Esophagus squamous epithelium (tissue), 5 donors: ENCODE measurements at regions of chr2 and their contacts with region 1.

Region 1: DNA sequence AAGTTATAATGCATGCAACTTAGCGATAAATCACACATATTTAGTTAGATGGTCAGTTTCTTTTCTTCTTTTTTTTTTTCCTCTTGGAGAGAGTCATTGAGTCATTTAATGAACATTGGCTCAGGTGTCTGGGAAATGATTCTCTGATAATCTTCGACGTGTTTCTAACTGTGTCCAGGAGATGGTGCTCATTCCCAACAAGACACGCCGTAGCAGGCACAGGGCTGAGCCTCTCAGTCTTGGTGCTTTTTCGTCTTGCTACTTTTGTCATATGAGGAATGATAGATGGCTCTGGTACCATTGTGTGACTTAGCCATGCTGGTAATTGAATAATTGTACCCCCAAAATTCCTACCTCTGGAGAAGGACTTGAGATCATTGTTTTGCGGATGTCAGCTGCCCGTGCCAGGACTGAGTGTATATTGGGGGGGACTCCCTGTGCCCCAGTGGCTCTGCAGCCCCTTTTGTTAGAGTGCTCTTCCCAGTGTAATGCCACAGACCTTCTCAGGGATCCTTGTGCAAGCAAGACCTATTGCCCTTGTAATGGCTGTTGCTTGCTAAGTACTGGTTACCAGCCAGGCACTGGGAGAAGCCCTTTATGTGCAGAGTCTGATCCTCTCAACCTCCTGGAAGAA is 107.6 kb upstream of the CYRIA start:
- DNase-seq: no peak
- H3K4me3 ChIP-seq: no peak overlapping the region
- H3K27ac ChIP-seq: no peak overlapping the region
- H3K4me1 ChIP-seq: no peaks in the 10 kb centered on the region
- H3K27me3 ChIP-seq: peaks cover 0 to 13% (median 0%) of the 10 kb centered on the region in 4 donors
- CTCF ChIP-seq: peak in 5 of 6 experiments; percentile 38 to 72 (median 48)
- POLR2A ChIP-seq: no peak

Region 2: DNA sequence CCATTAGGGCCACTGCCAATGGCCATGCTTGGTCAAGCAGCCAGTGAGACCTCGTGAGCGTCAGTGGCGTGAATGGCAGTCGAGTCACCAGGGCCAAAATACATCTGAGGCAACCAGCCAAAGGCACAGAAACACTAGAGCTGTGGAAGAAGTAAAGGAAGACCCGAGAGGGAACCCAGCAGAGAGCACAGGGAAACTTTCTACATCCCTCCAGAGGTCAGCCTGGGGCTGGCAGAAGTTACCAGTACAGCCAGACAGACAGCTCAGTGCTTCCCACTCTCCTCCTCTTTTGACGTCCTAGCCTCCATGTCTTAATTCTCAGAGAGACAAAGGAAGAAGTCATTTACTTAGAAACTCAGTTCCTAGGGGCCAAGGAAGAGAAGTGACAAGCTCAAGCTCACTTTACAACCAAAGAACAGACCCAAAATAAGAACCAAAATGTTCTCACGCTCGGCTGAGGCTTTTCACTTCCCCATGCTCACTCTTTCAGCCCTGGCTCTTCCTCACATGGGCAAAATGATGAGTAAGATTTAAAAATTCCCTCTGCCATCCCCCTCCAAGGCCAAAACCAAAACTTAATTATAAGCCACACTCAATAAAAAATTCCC is 116.3 kb before region 1 on chr2:
- intact Hi-C with region 1: no loop called
- DNase-seq: no peak
- H3K4me3 ChIP-seq: no peak overlapping the region
- H3K27ac ChIP-seq: peak overlapping the region in 3 of 4 donors; percentile 31 to 73 (median 43)
- H3K4me1 ChIP-seq: peaks cover 13 to 72% (median 30%) of the 10 kb centered on the region in 3 donors
- H3K27me3 ChIP-seq: no peaks in the 10 kb centered on the region
- CTCF ChIP-seq: no peak
- POLR2A ChIP-seq: no peak

Region 3: GRCh38 chr2:16832910-16833309 is 59.7 kb after region 1 on chr2:
- intact Hi-C with region 1: no loop called
- DNase-seq: no peak
- H3K4me3 ChIP-seq: no peak overlapping the region
- H3K27ac ChIP-seq: no peak overlapping the region
- H3K4me1 ChIP-seq: no peaks in the 10 kb centered on the region
- H3K27me3 ChIP-seq: peaks cover 0 to 18% (median 0%) of the 10 kb centered on the region in 4 donors
- CTCF ChIP-seq: no peak
- POLR2A ChIP-seq: no peak

Region 4: DNA sequence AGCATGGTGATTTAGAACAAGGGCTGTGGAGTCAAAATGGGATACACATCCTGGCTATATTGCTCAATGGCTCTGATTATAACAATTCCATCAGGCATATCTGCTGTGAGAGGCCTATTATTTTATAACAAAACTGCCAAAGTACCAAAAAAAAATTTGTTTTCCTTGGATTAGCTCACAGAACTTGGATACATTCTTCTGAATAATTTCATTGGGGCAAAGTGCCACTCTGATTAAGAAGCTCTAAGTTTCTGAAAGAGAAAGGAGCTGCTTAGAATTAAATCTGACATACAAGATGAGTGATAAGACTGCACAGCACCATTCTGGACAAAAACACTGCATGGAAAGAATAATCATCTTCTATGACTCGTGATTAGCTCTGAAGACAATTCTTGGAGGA is 894.7 kb after region 1 on chr2:
- intact Hi-C with region 1: loop called (anchors 10 kb)
- DNase-seq: no peak
- H3K4me3 ChIP-seq: no peak overlapping the region
- H3K27ac ChIP-seq: no peak overlapping the region
- H3K4me1 ChIP-seq: no peaks in the 10 kb centered on the region
- H3K27me3 ChIP-seq: no peaks in the 10 kb centered on the region
- CTCF ChIP-seq: no peak
- POLR2A ChIP-seq: no peak